GM10248 (cell line): ENCODE measurements at regions of chr12 and their contacts with region 1.

Region 1: GRCh38 chr12:93704122-93704521 is 26.9 kb downstream of the CRADD start:
- DNase-seq: peak; percentile 22
- CTCF ChIP-seq: no peak

Region 2: GRCh38 chr12:93714382-93714781 is 10.3 kb after region 1 on chr12:
- CTCF ChIA-PET with region 1: interaction called, 15 read pairs
- POLR2A ChIA-PET with region 1: no interaction called
- DNase-seq: no peak
- CTCF ChIP-seq: no peak